Stomach (tissue), 19 donors: ENCODE measurements at regions of chr6 and their contacts with region 1.

Region 1: DNA sequence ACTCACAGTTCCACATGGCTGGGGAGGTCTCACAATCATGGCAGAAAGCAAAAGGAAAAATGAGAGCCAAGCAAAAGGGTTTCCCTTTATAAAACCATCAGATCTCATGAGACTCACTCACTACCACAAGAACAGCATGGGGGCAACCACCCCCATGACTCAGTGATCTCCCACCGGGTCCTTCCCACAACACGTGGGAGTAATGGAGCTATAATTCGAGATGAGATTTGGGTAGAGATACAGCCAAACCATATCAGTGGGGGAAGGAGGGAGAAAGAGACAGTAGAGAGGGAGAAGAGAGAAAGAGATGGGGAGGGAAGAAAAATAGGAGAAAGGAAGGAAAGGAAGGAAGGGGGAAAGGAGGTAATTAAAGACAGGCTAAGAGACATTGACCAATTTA is 30.1 kb downstream of the GMDS start:
- DNase-seq: no peak
- H3K4me3 ChIP-seq: no peak overlapping the region
- H3K27ac ChIP-seq: no peak overlapping the region
- H3K4me1 ChIP-seq: peaks cover 0 to 14% (median 7%) of the 10 kb centered on the region in 4 donors
- H3K27me3 ChIP-seq: no peaks in the 10 kb centered on the region
- CTCF ChIP-seq: no peak
- EP300 ChIP-seq: no peak
- POLR2A ChIP-seq: no peak

Region 2: GRCh38 chr6:2166717-2167116 is 48.6 kb before region 1 on chr6:
- intact Hi-C with region 1: no loop called
- DNase-seq: peak in 1 of 2 donors; percentile 57
- H3K4me3 ChIP-seq: no peak overlapping the region
- H3K27ac ChIP-seq: peak overlapping the region in 2 of 5 donors; percentile 4 to 20
- H3K4me1 ChIP-seq: peaks cover 9 to 34% (median 23%) of the 10 kb centered on the region in 4 donors
- H3K27me3 ChIP-seq: no peaks in the 10 kb centered on the region
- CTCF ChIP-seq: no peak
- EP300 ChIP-seq: no peak
- POLR2A ChIP-seq: no peak

Region 3: GRCh38 chr6:2353412-2354137 is 138.2 kb after region 1 on chr6:
- intact Hi-C with region 1: loop called (anchors 10 kb)
- DNase-seq: peak; percentile 78 to 89
- H3K4me3 ChIP-seq: no peak overlapping the region
- H3K27ac ChIP-seq: peak overlapping the region in 1 of 5 donors; percentile 36
- H3K4me1 ChIP-seq: peaks cover 0 to 18% (median 7%) of the 10 kb centered on the region in 4 donors
- H3K27me3 ChIP-seq: no peaks in the 10 kb centered on the region
- CTCF ChIP-seq: peak in 5 of 7 experiments; percentile 41 to 79 (median 72)
- EP300 ChIP-seq: no peak
- POLR2A ChIP-seq: no peak

Region 4: DNA sequence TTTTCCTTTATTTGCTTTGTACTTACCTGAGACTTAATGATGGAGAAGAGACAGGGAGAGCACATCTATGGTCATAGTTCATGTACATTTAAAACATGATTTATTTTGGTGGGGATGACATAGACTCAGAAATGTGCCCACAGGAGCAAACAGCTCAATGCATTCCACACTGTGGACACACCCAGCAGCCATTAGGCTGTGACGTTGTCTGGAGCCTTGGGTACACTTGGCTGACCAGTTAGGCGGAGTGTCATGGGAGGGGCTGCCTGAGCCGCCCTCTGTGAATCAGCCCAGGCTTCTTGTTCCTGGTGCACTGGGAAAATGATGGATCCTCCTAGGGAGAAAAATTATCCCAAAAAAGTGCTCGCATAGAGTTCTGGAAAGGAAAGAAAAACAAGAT is 261.0 kb after region 1 on chr6:
- intact Hi-C with region 1: no loop called
- DNase-seq: peak in 1 of 2 donors; percentile 80
- H3K4me3 ChIP-seq: no peak overlapping the region
- H3K27ac ChIP-seq: no peak overlapping the region
- H3K4me1 ChIP-seq: peaks cover 0 to 10% (median 0%) of the 10 kb centered on the region in 4 donors
- H3K27me3 ChIP-seq: no peaks in the 10 kb centered on the region
- CTCF ChIP-seq: no peak
- EP300 ChIP-seq: no peak
- POLR2A ChIP-seq: no peak